T-cell (primary cell): ENCODE measurements at regions of chr2 and their contacts with region 1.

Region 1: DNA sequence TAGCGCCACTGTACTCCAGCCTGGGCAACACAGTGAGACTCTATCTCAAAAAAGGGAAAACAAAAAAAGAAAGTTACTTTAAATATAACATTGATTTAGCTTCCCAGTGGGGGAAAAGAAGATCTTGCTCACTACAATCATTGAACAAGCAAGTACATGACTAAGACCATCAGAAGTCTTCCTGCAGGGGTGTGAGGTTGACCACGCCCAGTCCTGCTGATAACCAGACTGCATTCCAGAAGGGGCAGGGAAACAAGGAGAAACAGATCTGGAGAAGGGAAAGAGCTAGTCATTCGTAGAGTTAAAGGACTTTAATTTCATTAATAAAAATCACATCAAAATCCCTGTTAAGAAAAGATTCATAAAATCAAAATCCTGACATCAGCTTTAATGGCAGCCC is 77.5 kb downstream of the EPHA4 start:
- DNase-seq: no peak
- ATAC-seq: no peak
- H3K4me3 ChIP-seq: no peak overlapping the region
- H3K4me3 Mint-ChIP-seq: no peak overlapping the region
- H3K27ac ChIP-seq: no peak overlapping the region
- H3K27ac Mint-ChIP-seq: no peak overlapping the region
- H3K4me1 ChIP-seq: no peaks in the 10 kb centered on the region
- H3K4me1 Mint-ChIP-seq: peaks cover 0 to 11% (median 2%) of the 10 kb centered on the region in 3 donors
- H3K27me3 ChIP-seq: no peaks in the 10 kb centered on the region
- H3K27me3 Mint-ChIP-seq: no peaks in the 10 kb centered on the region

Region 2: DNA sequence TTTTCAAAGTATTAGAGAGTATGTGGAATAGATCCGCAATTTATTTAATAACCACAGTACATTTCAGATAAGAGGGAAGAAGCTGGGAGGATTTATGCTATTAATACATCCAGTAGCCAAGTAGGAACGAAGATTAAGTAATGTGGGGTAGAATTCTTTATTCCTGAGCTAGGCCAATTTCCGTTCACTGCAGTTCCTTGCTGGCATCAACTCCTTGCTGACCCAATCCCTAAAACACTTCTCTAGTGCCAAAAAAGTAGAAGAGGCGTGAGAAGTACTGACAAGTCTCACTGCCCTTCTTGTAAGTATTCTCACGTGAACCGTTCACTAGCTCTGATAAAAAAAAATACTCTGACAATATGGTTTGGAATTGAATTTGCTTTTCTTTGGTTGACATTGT is 133.8 kb before region 1 on chr2:
- CTCF ChIA-PET with region 1: no interaction called
- POLR2A ChIA-PET with region 1: interaction called in 1 of 2 experiments, 11 read pairs
- DNase-seq: no peak
- ATAC-seq: no peak
- H3K4me3 ChIP-seq: no peak overlapping the region
- H3K4me3 Mint-ChIP-seq: no peak overlapping the region
- H3K27ac ChIP-seq: no peak overlapping the region
- H3K27ac Mint-ChIP-seq: no peak overlapping the region
- H3K4me1 ChIP-seq: no peaks in the 10 kb centered on the region
- H3K4me1 Mint-ChIP-seq: no peaks in the 10 kb centered on the region
- H3K27me3 ChIP-seq: peaks cover 0 to 4% of the 10 kb centered on the region in 2 experiments
- H3K27me3 Mint-ChIP-seq: peaks cover 4 to 5% of the 10 kb centered on the region in 2 donors

Region 3: GRCh38 chr2:221461901-221462300 is 32.7 kb before region 1 on chr2:
- CTCF ChIA-PET with region 1: no interaction called
- POLR2A ChIA-PET with region 1: no interaction called
- DNase-seq: no peak
- ATAC-seq: no peak
- H3K4me3 ChIP-seq: no peak overlapping the region
- H3K4me3 Mint-ChIP-seq: no peak overlapping the region
- H3K27ac ChIP-seq: no peak overlapping the region
- H3K27ac Mint-ChIP-seq: no peak overlapping the region
- H3K4me1 ChIP-seq: peaks cover 15 to 32% of the 10 kb centered on the region in 2 experiments
- H3K4me1 Mint-ChIP-seq: peaks cover 37 to 48% (median 38%) of the 10 kb centered on the region in 3 donors
- H3K27me3 ChIP-seq: no peaks in the 10 kb centered on the region
- H3K27me3 Mint-ChIP-seq: no peaks in the 10 kb centered on the region

Region 4: GRCh38 chr2:221527776-221528309 is 33.3 kb after region 1 on chr2:
- CTCF ChIA-PET with region 1: no interaction called
- POLR2A ChIA-PET with region 1: no interaction called
- DNase-seq: peak in 29 of 35 experiments; percentile 8 to 50 (median 29)
- ATAC-seq: peak; percentile 74 to 83 (median 78)
- H3K4me3 ChIP-seq: no peak overlapping the region
- H3K4me3 Mint-ChIP-seq: peak overlapping the region; percentile 57 to 72 (median 68)
- H3K27ac ChIP-seq: peak overlapping the region; percentile 81
- H3K27ac Mint-ChIP-seq: peak overlapping the region; percentile 89 to 91
- H3K4me1 ChIP-seq: peaks cover 38 to 48% of the 10 kb centered on the region in 2 experiments
- H3K4me1 Mint-ChIP-seq: peaks cover 50 to 79% (median 51%) of the 10 kb centered on the region in 3 donors
- H3K27me3 ChIP-seq: no peaks in the 10 kb centered on the region
- H3K27me3 Mint-ChIP-seq: no peaks in the 10 kb centered on the region

Region 5: DNA sequence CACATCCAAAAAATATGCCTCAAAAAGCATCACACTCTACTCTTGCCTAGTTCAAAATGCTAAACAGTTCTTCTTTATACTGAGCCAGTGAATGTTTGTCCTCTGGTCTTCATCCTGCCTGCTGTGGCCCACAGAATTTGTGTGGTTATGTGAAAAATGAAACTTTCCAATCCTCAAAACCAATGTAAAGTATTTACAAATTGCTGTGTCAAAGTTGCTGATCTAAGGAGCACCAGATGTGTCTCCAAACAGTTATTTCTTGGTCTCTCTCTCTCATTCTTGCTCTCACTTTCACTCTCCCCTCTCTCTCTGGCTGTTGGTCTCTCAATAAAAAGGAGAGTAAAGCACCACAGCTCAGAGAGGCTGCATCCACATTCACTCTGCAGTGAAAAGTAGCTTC is 54.6 kb after region 1 on chr2:
- CTCF ChIA-PET with region 1: no interaction called
- POLR2A ChIA-PET with region 1: no interaction called
- DNase-seq: no peak
- ATAC-seq: no peak
- H3K4me3 ChIP-seq: no peak overlapping the region
- H3K4me3 Mint-ChIP-seq: no peak overlapping the region
- H3K27ac ChIP-seq: no peak overlapping the region
- H3K27ac Mint-ChIP-seq: peak overlapping the region in 1 of 2 donors; percentile 0
- H3K4me1 ChIP-seq: no peaks in the 10 kb centered on the region
- H3K4me1 Mint-ChIP-seq: peaks cover 15 to 55% (median 20%) of the 10 kb centered on the region in 3 donors
- H3K27me3 ChIP-seq: no peaks in the 10 kb centered on the region
- H3K27me3 Mint-ChIP-seq: no peaks in the 10 kb centered on the region